Activated T-helper 1 cell treated with anti-CD3 and anti-CD28 coated beads, Interleukin-12 subunit alpha, Interleukin-12 subunit beta, Interleukin-2, Interleukin-4 antibody, amounts not matched to agents 30 ng/mL and 10 ng/mL and 1 ng/mL, durations not matched to agents 14 hours and 24 hours and 36 hours (primary cell): ENCODE measurements at regions of chr12 and their contacts with region 1.

Region 1: GRCh38 chr12:6688999-6689882 is at the start of gene ZNF384:
- DNase-seq: peak; percentile 94
- H3K4me3 Mint-ChIP-seq: peak within 1 kb of the TSS; percentile 97
- H3K27ac Mint-ChIP-seq: peak within 1 kb of the TSS; percentile 87
- H3K4me1 Mint-ChIP-seq: peaks cover 58% of the 10 kb centered on the region
- H3K27me3 Mint-ChIP-seq: no peaks in the 10 kb centered on the region
- total RNA-seq, gene ZNF384: 79.6 and 89.8 TPM in 2 replicates

Region 2: GRCh38 chr12:6266444-6267138 is 422.6 kb before region 1 on chr12:
- intact Hi-C with region 1: no loop called
- DNase-seq: no peak
- H3K4me3 Mint-ChIP-seq: no peak overlapping the region
- H3K27ac Mint-ChIP-seq: peak overlapping the region; percentile 82
- H3K4me1 Mint-ChIP-seq: peaks cover 24% of the 10 kb centered on the region
- H3K27me3 Mint-ChIP-seq: peaks cover 2% of the 10 kb centered on the region

Region 3: GRCh38 chr12:6423267-6424007 is 265.8 kb before region 1 on chr12:
- intact Hi-C with region 1: loop called (anchors 10 kb)
- DNase-seq: peak; percentile 75
- H3K4me3 Mint-ChIP-seq: no peak overlapping the region
- H3K27ac Mint-ChIP-seq: peak overlapping the region; percentile 50
- H3K4me1 Mint-ChIP-seq: peaks cover 44% of the 10 kb centered on the region
- H3K27me3 Mint-ChIP-seq: peaks cover 1% of the 10 kb centered on the region

Region 4: GRCh38 chr12:6613776-6614512 is 75.3 kb before region 1 on chr12:
- intact Hi-C with region 1: loop called (anchors 1 kb)
- DNase-seq: no peak
- H3K4me3 Mint-ChIP-seq: no peak overlapping the region
- H3K27ac Mint-ChIP-seq: peak overlapping the region; percentile 50
- H3K4me1 Mint-ChIP-seq: peaks cover 33% of the 10 kb centered on the region
- H3K27me3 Mint-ChIP-seq: no peaks in the 10 kb centered on the region

Region 5: GRCh38 chr12:6752921-6753771 is 63.9 kb after region 1 on chr12 and contains the start of gene MLF2:
- intact Hi-C with region 1: loop called (anchors 1 kb)
- DNase-seq: peak; percentile 97
- H3K4me3 Mint-ChIP-seq: peak within 1 kb of the TSS; percentile 94
- H3K27ac Mint-ChIP-seq: peak within 1 kb of the TSS; percentile 96
- H3K4me1 Mint-ChIP-seq: peaks cover 32% of the 10 kb centered on the region
- H3K27me3 Mint-ChIP-seq: no peaks in the 10 kb centered on the region
- total RNA-seq, gene MLF2: 159 and 161 TPM in 2 replicates

Region 6: GRCh38 chr12:6873094-6874014 is 184.1 kb after region 1 on chr12 and contains the start of gene SPSB2:
- intact Hi-C with region 1: loop called (anchors 1 kb)
- DNase-seq: peak; percentile 99
- H3K4me3 Mint-ChIP-seq: peak within 1 kb of the TSS; percentile 96
- H3K27ac Mint-ChIP-seq: peak within 1 kb of the TSS; percentile 86
- H3K4me1 Mint-ChIP-seq: peaks cover 56% of the 10 kb centered on the region
- H3K27me3 Mint-ChIP-seq: no peaks in the 10 kb centered on the region
- total RNA-seq, gene SPSB2: 3.4 and 4.7 TPM in 2 replicates

Region 7: DNA sequence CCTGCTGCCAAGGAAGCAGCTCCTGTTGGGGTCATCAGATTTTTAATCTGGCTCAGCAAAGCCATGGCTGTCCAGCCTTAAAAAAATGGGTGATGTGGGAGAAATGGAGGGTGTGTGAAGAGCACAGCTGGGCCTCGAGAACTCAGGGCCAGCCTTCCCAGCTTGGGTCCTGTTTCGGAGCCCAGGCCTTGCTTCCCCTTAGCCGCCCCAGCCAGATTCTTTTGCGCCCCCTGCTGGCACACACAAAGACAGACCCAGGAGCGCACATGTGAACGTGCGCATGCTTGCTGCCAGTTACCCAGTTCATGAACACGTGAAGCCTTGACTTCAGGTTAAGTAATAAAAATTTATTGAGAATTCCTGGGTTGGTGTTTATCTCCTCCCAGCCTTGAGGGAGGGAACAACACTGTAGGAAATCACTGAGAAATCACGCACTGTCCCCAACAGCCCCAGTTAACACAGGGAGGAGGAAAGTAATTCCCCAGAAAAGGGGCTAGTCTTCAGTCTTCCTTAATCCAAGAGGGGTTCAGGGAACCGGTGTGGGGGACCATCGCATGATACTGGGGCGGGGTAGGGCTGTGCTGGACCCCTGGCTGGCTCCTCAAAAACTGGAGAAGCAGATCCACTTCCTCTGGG is 275.9 kb after region 1 on chr12:
- intact Hi-C with region 1: loop called (anchors 1 kb)
- DNase-seq: peak; percentile 78
- H3K4me3 Mint-ChIP-seq: no peak overlapping the region
- H3K27ac Mint-ChIP-seq: peak overlapping the region; percentile 90
- H3K4me1 Mint-ChIP-seq: peaks cover 59% of the 10 kb centered on the region
- H3K27me3 Mint-ChIP-seq: no peaks in the 10 kb centered on the region